T-cell (primary cell): ENCODE measurements at regions of chr12 and their contacts with region 1.

Region 1: GRCh38 chr12:57462251-57462911 is 2.8 kb downstream of the GLI1 start:
- DNase-seq: peak; percentile 72 to 94 (median 82)
- ATAC-seq: peak; percentile 67 to 76 (median 72)
- H3K4me3 ChIP-seq: peak overlapping the region; percentile 51 to 88
- H3K4me3 Mint-ChIP-seq: peak overlapping the region; percentile 81 to 88 (median 88)
- H3K27ac ChIP-seq: no peak overlapping the region
- H3K27ac Mint-ChIP-seq: peak overlapping the region; percentile 70 to 80
- H3K4me1 ChIP-seq: peaks cover 16 to 48% of the 10 kb centered on the region in 2 experiments
- H3K4me1 Mint-ChIP-seq: peaks cover 38 to 51% (median 50%) of the 10 kb centered on the region in 3 donors
- H3K27me3 ChIP-seq: peaks cover 0 to 27% of the 10 kb centered on the region in 2 experiments
- H3K27me3 Mint-ChIP-seq: peaks cover 0 to 16% of the 10 kb centered on the region in 2 donors

Region 2: GRCh38 chr12:57173089-57173488 is 289.3 kb before region 1 on chr12:
- CTCF ChIA-PET with region 1: no interaction called
- POLR2A ChIA-PET with region 1: no interaction called
- DNase-seq: peak in 3 of 35 experiments; percentile 9 to 37 (median 17)
- ATAC-seq: peak in 1 of 4 experiments; percentile 46
- H3K4me3 ChIP-seq: no peak overlapping the region
- H3K4me3 Mint-ChIP-seq: no peak overlapping the region
- H3K27ac ChIP-seq: no peak overlapping the region
- H3K27ac Mint-ChIP-seq: peak overlapping the region in 1 of 2 donors; percentile 51
- H3K4me1 ChIP-seq: no peaks in the 10 kb centered on the region
- H3K4me1 Mint-ChIP-seq: no peaks in the 10 kb centered on the region
- H3K27me3 ChIP-seq: peaks cover 0 to 8% of the 10 kb centered on the region in 2 experiments
- H3K27me3 Mint-ChIP-seq: no peaks in the 10 kb centered on the region

Region 3: GRCh38 chr12:57430112-57430930 is 32.1 kb before region 1 on chr12:
- CTCF ChIA-PET with region 1: interaction called, 3 to 11 read pairs
- POLR2A ChIA-PET with region 1: interaction called in 1 of 2 experiments, 3 read pairs
- DNase-seq: peak in 22 of 35 experiments; percentile 8 to 65 (median 31)
- ATAC-seq: peak; percentile 59 to 70 (median 66)
- H3K4me3 ChIP-seq: peak overlapping the region; percentile 47 to 62
- H3K4me3 Mint-ChIP-seq: peak overlapping the region; percentile 88 to 99 (median 97)
- H3K27ac ChIP-seq: peak overlapping the region; percentile 98
- H3K27ac Mint-ChIP-seq: peak overlapping the region; percentile 99
- H3K4me1 ChIP-seq: peaks cover 8 to 25% of the 10 kb centered on the region in 2 experiments
- H3K4me1 Mint-ChIP-seq: peaks cover 36 to 48% (median 47%) of the 10 kb centered on the region in 3 donors
- H3K27me3 ChIP-seq: no peaks in the 10 kb centered on the region
- H3K27me3 Mint-ChIP-seq: no peaks in the 10 kb centered on the region

Region 4: DNA sequence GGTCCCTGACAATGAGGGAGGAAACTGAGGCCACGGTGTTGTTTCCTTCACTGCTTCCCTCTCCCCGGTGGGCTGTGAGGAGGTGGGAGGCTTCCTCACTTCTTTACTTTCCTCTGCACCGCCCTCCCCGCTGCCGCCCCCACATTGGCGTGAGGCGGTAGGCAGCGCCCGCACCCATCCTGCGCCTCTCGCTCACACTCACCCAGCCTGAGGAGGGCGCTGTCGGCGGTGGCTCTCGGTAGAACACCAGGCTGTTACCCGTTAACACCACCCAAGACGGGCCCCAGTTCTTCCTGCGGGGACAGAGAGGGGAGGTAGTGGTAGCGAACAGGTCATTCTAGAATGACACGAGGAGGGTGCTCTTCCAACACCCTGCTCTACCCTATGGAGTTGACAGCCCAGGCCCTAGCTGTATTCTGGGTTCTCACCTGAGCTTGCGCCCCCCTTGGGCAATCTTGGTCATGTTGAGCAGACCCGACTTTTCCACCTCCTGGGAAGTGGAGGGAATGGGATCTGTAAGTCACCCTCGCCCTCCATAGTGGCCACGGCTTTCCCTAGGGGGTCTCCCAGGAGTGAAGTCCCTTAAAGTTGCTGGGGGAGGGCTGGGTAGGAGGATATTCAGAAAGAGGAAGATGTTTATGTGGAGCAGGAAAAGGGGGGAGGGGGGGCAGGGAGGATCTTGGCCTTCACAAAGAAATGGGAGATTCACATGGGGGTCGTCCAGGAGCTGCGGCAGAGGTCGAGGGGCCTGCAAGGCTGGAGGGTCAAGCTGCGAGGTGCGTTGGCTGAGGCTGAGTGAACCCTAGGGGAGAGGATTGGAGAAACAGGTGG is 14.0 kb after region 1 on chr12:
- CTCF ChIA-PET with region 1: interaction called, 4 to 53 read pairs
- POLR2A ChIA-PET with region 1: interaction called, 4 to 5 read pairs
- DNase-seq: peak; percentile 55 to 80 (median 71)
- ATAC-seq: peak; percentile 21 to 41 (median 23)
- H3K4me3 ChIP-seq: peak overlapping the region; percentile 83 to 91
- H3K4me3 Mint-ChIP-seq: peak overlapping the region; percentile 98 to 99 (median 98)
- H3K27ac ChIP-seq: peak overlapping the region; percentile 98
- H3K27ac Mint-ChIP-seq: peak overlapping the region; percentile 98
- H3K4me1 ChIP-seq: peaks cover 28 to 93% of the 10 kb centered on the region in 2 experiments
- H3K4me1 Mint-ChIP-seq: peaks cover 71 to 92% (median 89%) of the 10 kb centered on the region in 3 donors
- H3K27me3 ChIP-seq: no peaks in the 10 kb centered on the region
- H3K27me3 Mint-ChIP-seq: no peaks in the 10 kb centered on the region

Region 5: GRCh38 chr12:57744194-57744776 is 281.9 kb after region 1 on chr12:
- CTCF ChIA-PET with region 1: no interaction called
- POLR2A ChIA-PET with region 1: no interaction called
- DNase-seq: peak in 32 of 35 experiments; percentile 45 to 86 (median 68)
- ATAC-seq: peak; percentile 8 to 46 (median 14)
- H3K4me3 ChIP-seq: peak overlapping the region; percentile 81 to 96
- H3K4me3 Mint-ChIP-seq: peak overlapping the region; percentile 93 to 97 (median 94)
- H3K27ac ChIP-seq: peak overlapping the region; percentile 96
- H3K27ac Mint-ChIP-seq: peak overlapping the region; percentile 96 to 98
- H3K4me1 ChIP-seq: peaks cover 34 to 52% of the 10 kb centered on the region in 2 experiments
- H3K4me1 Mint-ChIP-seq: peaks cover 53 to 61% (median 57%) of the 10 kb centered on the region in 3 donors
- H3K27me3 ChIP-seq: no peaks in the 10 kb centered on the region
- H3K27me3 Mint-ChIP-seq: no peaks in the 10 kb centered on the region